ENCODE measurements at regions of chrX and their contacts with region 1.

Region 1: DNA sequence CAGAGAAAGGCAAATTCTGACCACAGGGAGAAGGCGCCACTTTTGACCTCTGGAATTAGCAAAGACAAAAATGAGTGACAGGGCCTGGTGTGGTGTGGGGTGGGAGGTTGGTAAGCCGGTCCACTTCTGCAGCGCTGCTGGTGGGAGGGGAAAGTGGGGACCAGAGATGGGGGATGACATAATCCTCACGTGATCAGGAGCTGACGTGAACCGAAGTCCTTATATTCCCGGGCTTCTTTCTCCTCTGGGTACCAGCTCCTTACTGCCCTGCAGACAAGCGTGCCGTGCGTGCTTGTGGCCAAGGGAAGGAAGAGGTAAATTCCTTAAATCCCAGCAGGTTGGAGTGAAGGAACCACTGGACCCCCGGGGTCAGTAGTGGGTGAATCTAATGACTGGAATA is at the start of gene TCEAL7:
- DNase-seq: peak; percentile 81
- H3K4me3 ChIP-seq: peak within 1 kb of the TSS; percentile 42 to 54
- H3K27ac ChIP-seq: peak within 1 kb of the TSS; percentile 59 to 84; a peak in 3 of 4 replicates
- H3K4me1 ChIP-seq: no peaks in the 10 kb centered on the region
- H3K27me3 ChIP-seq: no peaks in the 10 kb centered on the region; the same call in 1 of the 2 replicates
- CTCF ChIP-seq: no peak
- EP300 ChIP-seq: no peak
- RAD21 ChIP-seq: no peak
- polyA plus RNA-seq, gene TCEAL7: 20.2 and 26.0 TPM in 2 replicates

Region 2: GRCh38 chrX:103254921-103255493 is 75.0 kb before region 1 on chrX and contains the start of gene TCEAL8:
- CTCF ChIA-PET with region 1: no interaction called
- POLR2A ChIA-PET with region 1: interaction called, 14 read pairs
- DNase-seq: peak; percentile 60
- H3K4me3 ChIP-seq: peak within 1 kb of the TSS; percentile 74 to 75
- H3K27ac ChIP-seq: peak within 1 kb of the TSS; percentile 78 to 87
- H3K4me1 ChIP-seq: peaks cover 0 to 3% of the 10 kb centered on the region in 2 experiments; a peak in 2 of 4 replicates
- H3K27me3 ChIP-seq: no peaks in the 10 kb centered on the region
- CTCF ChIP-seq: no peak
- EP300 ChIP-seq: no peak
- RAD21 ChIP-seq: no peak
- polyA plus RNA-seq, gene TCEAL8: 36.5 and 43.5 TPM in 2 replicates

Region 3: DNA sequence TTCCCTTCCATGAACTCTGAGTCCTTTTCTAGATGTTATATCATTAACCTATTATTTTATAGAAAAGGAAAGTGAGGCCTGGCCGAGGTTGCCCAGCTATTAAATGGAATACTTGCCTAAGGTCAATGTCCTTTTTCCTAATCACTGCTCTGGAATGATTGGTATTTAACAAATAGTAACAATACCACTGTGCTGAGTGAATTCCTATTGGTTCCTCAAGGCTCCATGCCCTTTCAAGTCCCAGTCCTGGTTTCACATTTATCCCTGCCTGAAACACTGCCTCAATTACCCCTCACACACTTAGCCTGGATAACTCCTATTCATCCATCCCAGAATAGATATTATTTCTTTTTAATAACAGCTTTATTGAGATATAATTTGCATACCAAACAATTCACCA is 32.5 kb after region 1 on chrX:
- CTCF ChIA-PET with region 1: no interaction called
- POLR2A ChIA-PET with region 1: no interaction called
- DNase-seq: no peak
- H3K4me3 ChIP-seq: no peak overlapping the region
- H3K27ac ChIP-seq: no peak overlapping the region
- H3K4me1 ChIP-seq: peaks cover 0 to 3% of the 10 kb centered on the region in 2 experiments; a peak in 2 of 4 replicates
- H3K27me3 ChIP-seq: no peaks in the 10 kb centered on the region
- CTCF ChIP-seq: no peak
- EP300 ChIP-seq: no peak
- RAD21 ChIP-seq: no peak

Region 4: GRCh38 chrX:103376118-103376978 is 46.4 kb after region 1 on chrX and contains the start of gene BEX3:
- CTCF ChIA-PET with region 1: no interaction called
- POLR2A ChIA-PET with region 1: interaction called, 11 read pairs
- DNase-seq: peak; percentile 85
- H3K4me3 ChIP-seq: peak within 1 kb of the TSS; percentile 60 to 67
- H3K27ac ChIP-seq: peak within 1 kb of the TSS; percentile 57 to 89
- H3K4me1 ChIP-seq: peaks cover 0 to 7% of the 10 kb centered on the region in 2 experiments; a peak in 2 of 4 replicates
- H3K27me3 ChIP-seq: no peaks in the 10 kb centered on the region; the same call in 1 of the 2 replicates
- CTCF ChIP-seq: no peak
- EP300 ChIP-seq: no peak
- RAD21 ChIP-seq: no peak
- polyA plus RNA-seq, gene BEX3: 292 and 392 TPM in 2 replicates